Cardiac septum (tissue), 1 donor: ENCODE measurements at regions of chr17 and their contacts with region 1.

Region 1: DNA sequence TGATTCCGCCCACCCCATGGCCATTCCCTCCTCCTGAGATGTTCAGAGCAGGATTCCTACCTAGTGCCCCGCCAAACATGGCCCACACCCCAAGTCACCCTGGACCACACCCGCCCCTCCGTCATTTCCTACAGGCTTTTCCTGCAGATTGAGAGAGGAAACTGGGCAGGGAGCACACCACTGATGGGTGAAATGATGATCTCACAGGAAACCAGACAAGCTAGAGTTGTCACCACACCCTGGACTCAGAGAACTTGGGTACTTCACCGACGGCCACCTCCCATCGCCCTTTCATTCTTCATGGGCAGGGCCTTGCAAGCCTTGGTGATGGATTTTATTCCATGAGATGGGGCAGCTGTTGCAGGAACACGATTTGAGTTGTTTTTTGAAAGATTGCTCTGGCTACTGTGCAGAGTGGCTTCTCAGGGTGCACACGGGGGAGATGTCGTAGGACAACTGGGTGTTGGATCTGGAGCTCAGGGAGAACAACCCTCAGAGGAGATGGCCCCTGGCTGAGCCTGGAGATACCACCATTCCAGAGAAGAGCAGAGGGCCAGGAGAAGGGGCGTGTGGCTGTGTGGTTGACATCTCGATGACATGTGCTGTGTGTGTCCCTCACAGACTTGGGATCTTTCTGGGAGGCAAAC is 7.4 kb upstream of the B9D1 start:
- DNase-seq: no peak

Region 2: DNA sequence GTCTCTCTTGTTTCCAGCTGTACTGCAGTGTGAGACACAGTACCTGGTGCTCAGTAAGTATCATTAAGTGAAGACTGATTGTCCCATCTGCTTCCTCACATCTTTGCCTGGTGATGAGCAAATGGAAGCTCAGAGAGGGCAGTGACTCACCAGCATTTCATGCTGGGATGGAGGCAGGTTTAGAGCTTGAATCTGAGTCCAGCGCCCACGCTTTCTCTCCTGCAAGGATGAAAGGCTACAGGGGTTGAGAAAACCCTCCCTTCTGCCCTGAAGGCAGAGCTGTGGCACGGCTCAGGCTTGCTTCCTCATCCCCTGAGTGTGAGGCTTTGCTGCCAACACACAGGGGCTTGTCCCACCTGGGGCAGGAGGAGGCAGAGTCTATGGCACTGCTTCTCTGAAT is 39.5 kb after region 1 on chr17:
- intact Hi-C with region 1: loop called (anchors 5 kb)
- DNase-seq: peak; percentile 36